Activated CD4-positive, alpha-beta T cell treated with anti-CD3 and anti-CD28 coated beads for 36 hours (primary cell): ENCODE measurements at regions of chr1 and their contacts with region 1.

Region 1: DNA sequence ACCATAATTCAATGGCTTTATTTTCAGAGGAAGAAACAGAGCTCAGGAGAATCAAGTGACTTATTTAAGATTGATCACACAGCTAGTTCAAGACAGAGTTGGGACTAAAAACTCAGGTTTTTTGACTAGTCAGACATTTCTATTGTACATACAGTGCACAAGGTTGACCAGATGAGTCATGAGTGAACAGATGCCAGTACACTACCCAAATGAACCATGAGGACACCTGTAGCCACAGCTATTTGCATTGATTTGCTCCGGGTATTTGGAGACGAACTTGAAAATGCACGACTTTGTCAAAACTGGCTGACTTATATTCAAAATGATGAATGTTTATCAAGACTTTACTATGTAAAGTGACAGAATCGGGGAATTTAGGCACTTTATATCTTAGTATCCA is 161.7 kb upstream of the ST6GALNAC5 start:
- DNase-seq: no peak
- ATAC-seq: no peak
- H3K4me3 Mint-ChIP-seq: no peak overlapping the region
- H3K27ac Mint-ChIP-seq: no peak overlapping the region
- H3K4me1 Mint-ChIP-seq: no peaks in the 10 kb centered on the region
- H3K27me3 Mint-ChIP-seq: peaks cover 6% of the 10 kb centered on the region

Region 2: GRCh38 chr1:76687307-76688175 is 18.0 kb before region 1 on chr1:
- CTCF ChIA-PET with region 1: no interaction called
- POLR2A ChIA-PET with region 1: no interaction called
- intact Hi-C with region 1: loop called in 1 of 2 experiments (anchors 1 kb)
- DNase-seq: no peak
- ATAC-seq: no peak
- H3K4me3 Mint-ChIP-seq: no peak overlapping the region
- H3K27ac Mint-ChIP-seq: no peak overlapping the region
- H3K4me1 Mint-ChIP-seq: no peaks in the 10 kb centered on the region
- H3K27me3 Mint-ChIP-seq: peaks cover 3% of the 10 kb centered on the region

Region 3: DNA sequence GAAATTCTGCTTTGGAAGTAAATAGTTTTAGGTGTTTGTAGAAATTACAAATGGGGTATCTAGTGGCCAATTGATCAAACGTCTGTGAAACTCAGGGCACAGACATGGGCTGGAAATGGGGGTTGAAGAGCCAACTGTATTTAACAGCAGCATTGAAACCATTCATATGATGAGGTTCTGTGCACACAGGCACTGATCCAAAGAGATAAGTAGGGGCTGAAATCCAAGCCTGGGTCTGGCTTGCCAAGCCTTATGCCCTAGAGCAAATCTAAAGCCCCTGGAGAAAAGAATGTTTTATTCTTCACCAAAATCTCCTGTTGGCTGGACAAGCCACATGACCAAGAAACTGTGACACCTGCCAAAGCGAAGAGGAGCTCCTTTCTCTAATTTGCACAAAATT is 94.1 kb after region 1 on chr1:
- CTCF ChIA-PET with region 1: no interaction called
- POLR2A ChIA-PET with region 1: no interaction called
- intact Hi-C with region 1: no loop called
- DNase-seq: no peak
- ATAC-seq: no peak
- H3K4me3 Mint-ChIP-seq: no peak overlapping the region
- H3K27ac Mint-ChIP-seq: no peak overlapping the region
- H3K4me1 Mint-ChIP-seq: no peaks in the 10 kb centered on the region
- H3K27me3 Mint-ChIP-seq: no peaks in the 10 kb centered on the region